ENCODE measurements at regions of chr10 and their contacts with region 1.

Region 1: DNA sequence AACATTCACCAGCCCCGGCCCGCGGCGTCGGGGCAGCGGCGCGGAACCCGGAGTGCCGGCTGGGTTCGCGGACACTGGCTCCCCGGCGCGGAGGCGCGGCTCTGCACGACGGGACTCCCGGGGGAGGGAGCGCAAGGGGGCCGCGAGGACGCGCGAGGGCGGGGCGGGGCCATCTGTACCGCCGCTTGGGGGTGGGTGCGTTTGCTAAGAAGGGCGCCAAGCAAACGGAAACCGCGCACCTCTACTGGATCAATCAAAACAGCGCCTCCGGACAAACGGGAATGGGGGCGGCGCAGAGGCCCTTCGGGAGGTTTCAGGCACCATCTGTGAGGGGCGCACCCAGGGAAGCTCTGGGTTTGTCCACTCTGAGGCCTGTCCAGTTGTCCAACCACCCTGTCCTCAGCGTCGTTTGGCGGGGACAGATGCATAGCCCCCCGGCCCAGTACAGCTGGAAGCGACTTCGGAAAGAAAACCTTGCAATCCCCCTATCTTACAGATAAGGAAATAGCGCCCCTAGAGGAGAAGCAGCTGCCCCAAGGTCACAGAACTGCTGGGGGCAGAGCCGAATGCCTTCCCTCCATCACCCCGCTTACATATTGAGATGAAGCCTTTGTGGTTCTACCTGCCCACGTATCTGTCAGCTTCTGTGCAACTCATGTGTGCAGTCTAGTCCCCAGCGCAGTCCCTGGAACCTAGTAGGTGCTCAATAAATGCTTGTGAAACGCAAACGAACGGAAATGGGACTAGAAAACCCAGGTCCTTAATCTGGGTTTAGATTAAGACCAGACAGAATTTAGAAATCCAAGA is 10.7 kb upstream of the SLIT1 start:
- DNase-seq: peak; percentile 81
- ATAC-seq: peak; percentile 91
- H3K4me3 Mint-ChIP-seq: peak overlapping the region; percentile 70
- H3K27ac Mint-ChIP-seq: no peak overlapping the region
- H3K4me1 Mint-ChIP-seq: peaks cover 13% of the 10 kb centered on the region
- H3K27me3 Mint-ChIP-seq: peaks cover 24% of the 10 kb centered on the region
- CTCF ChIP-seq: peak; percentile 84

Region 2: GRCh38 chr10:97059006-97059871 is 137.2 kb before region 1 on chr10:
- CTCF ChIA-PET with region 1: no interaction called
- POLR2A ChIA-PET with region 1: no interaction called
- intact Hi-C with region 1: no loop called
- DNase-seq: no peak
- ATAC-seq: no peak
- H3K4me3 Mint-ChIP-seq: no peak overlapping the region
- H3K27ac Mint-ChIP-seq: no peak overlapping the region
- H3K4me1 Mint-ChIP-seq: no peaks in the 10 kb centered on the region
- H3K27me3 Mint-ChIP-seq: no peaks in the 10 kb centered on the region
- CTCF ChIP-seq: no peak

Region 3: GRCh38 chr10:97081621-97082235 is 114.7 kb before region 1 on chr10:
- CTCF ChIA-PET with region 1: interaction called, 407 read pairs
- POLR2A ChIA-PET with region 1: no interaction called
- intact Hi-C with region 1: no loop called
- DNase-seq: peak; percentile 71
- ATAC-seq: peak; percentile 74
- H3K4me3 Mint-ChIP-seq: no peak overlapping the region
- H3K27ac Mint-ChIP-seq: no peak overlapping the region
- H3K4me1 Mint-ChIP-seq: no peaks in the 10 kb centered on the region
- H3K27me3 Mint-ChIP-seq: peaks cover 28% of the 10 kb centered on the region
- CTCF ChIP-seq: peak; percentile 66

Region 4: DNA sequence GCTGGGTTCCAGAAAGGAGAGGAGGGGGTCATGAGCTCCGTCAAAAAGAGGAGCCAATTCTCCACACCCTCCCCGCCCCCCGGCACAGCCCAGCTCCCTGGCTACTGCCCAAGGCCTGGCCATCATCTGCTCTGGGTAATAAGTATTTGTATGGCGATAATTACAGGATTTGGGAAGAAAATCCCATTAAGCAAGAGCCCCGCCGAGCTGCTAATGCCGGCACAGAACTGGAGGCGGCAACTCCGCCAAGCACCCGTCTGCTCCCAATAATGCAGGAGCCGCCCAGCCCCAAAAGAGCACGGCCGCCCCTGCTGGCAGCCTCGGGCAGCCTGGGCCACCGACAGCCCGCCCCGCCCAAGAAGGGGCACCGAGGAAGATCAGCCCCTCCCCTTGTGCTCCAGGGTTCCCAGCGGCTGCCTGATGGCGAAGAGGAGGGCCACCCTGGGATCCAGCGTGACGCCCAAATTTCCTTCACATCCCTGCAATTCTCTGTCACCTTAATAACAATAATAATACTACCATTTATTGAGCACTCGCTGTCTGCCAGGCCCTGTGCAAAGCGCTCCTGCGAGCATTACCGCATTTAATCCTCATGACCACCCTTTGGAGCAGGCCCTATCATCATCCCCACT is 16.6 kb before region 1 on chr10:
- CTCF ChIA-PET with region 1: interaction called, 11 read pairs
- POLR2A ChIA-PET with region 1: interaction called, 5 read pairs
- intact Hi-C with region 1: no loop called
- DNase-seq: no peak
- ATAC-seq: no peak
- H3K4me3 Mint-ChIP-seq: no peak overlapping the region
- H3K27ac Mint-ChIP-seq: no peak overlapping the region
- H3K4me1 Mint-ChIP-seq: peaks cover 2% of the 10 kb centered on the region
- H3K27me3 Mint-ChIP-seq: peaks cover 31% of the 10 kb centered on the region
- CTCF ChIP-seq: no peak

Region 5: GRCh38 chr10:97217299-97217698 is 20.9 kb after region 1 on chr10:
- CTCF ChIA-PET with region 1: interaction called, 166 read pairs
- POLR2A ChIA-PET with region 1: interaction called, 4 read pairs
- intact Hi-C with region 1: no loop called
- DNase-seq: no peak
- ATAC-seq: no peak
- H3K4me3 Mint-ChIP-seq: no peak overlapping the region
- H3K27ac Mint-ChIP-seq: peak overlapping the region; percentile 94
- H3K4me1 Mint-ChIP-seq: peaks cover 29% of the 10 kb centered on the region
- H3K27me3 Mint-ChIP-seq: no peaks in the 10 kb centered on the region
- CTCF ChIP-seq: no peak

Region 6: DNA sequence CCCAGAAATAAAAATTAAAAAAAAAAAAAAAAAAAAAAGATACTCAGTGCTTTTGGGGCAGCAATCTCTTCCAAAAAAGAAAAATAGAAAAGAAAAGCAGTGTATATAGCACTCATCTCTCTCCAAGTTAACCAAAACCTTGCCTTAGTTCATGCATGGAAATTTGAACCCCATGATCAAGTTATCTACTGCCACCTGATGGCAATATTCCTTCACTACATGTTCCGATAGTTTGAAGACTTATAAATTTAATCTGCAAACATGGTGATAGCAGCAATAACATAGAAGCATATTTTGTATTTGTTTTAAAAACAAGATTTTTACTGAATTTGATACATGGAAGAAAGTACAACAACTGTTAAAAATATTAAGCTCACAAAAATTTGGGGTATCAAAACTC is 38.0 kb after region 1 on chr10:
- CTCF ChIA-PET with region 1: interaction called, 17 read pairs
- POLR2A ChIA-PET with region 1: no interaction called
- intact Hi-C with region 1: no loop called
- DNase-seq: no peak
- ATAC-seq: peak; percentile 53
- H3K4me3 Mint-ChIP-seq: no peak overlapping the region
- H3K27ac Mint-ChIP-seq: no peak overlapping the region
- H3K4me1 Mint-ChIP-seq: peaks cover 7% of the 10 kb centered on the region
- H3K27me3 Mint-ChIP-seq: no peaks in the 10 kb centered on the region
- CTCF ChIP-seq: peak; percentile 74

Region 7: DNA sequence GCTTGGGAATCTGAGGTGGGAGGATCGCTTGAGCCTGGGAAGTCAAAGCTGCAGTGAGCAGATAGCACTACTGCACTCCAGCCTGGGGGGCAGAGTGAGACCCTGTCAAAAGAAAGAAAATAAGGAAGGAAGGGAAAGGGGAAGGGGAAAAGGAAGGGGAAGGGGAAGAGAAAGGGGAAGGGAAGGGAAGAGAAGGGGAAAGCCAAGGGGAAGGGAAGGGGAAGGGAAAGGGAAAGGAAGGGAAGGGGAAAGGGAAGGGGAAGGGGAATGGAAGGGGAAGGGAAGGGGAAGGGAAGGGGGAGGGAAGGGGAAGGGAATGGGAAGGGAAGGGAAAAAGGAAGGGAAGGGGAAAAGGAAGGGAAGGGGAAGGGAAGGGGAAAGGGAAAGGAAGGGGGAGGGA is 54.5 kb after region 1 on chr10:
- CTCF ChIA-PET with region 1: no interaction called
- POLR2A ChIA-PET with region 1: no interaction called
- intact Hi-C with region 1: no loop called
- DNase-seq: no peak
- ATAC-seq: no peak
- H3K4me3 Mint-ChIP-seq: no peak overlapping the region
- H3K27ac Mint-ChIP-seq: no peak overlapping the region
- H3K4me1 Mint-ChIP-seq: peaks cover 10% of the 10 kb centered on the region
- H3K27me3 Mint-ChIP-seq: no peaks in the 10 kb centered on the region
- CTCF ChIP-seq: no peak

Measured in activated CD8-positive, alpha-beta T cell treated with anti-CD3 and anti-CD28 coated beads for 36 hours (primary cell).